ENCODE measurements at regions of chr6 and their contacts with region 1.

Region 1: GRCh38 chr6:28266962-28267694 is at the start of gene ZSCAN26:
- DNase-seq: peak; percentile 89
- H3K4me3 Mint-ChIP-seq: no peak within 1 kb of the TSS
- H3K27ac Mint-ChIP-seq: no peak within 1 kb of the TSS
- H3K4me1 Mint-ChIP-seq: no peaks in the 10 kb centered on the region
- H3K27me3 Mint-ChIP-seq: no peaks in the 10 kb centered on the region
- CTCF ChIP-seq: no peak
- total RNA-seq, gene ZSCAN26: 11.3 and 13.1 TPM in 2 replicates

Region 2: DNA sequence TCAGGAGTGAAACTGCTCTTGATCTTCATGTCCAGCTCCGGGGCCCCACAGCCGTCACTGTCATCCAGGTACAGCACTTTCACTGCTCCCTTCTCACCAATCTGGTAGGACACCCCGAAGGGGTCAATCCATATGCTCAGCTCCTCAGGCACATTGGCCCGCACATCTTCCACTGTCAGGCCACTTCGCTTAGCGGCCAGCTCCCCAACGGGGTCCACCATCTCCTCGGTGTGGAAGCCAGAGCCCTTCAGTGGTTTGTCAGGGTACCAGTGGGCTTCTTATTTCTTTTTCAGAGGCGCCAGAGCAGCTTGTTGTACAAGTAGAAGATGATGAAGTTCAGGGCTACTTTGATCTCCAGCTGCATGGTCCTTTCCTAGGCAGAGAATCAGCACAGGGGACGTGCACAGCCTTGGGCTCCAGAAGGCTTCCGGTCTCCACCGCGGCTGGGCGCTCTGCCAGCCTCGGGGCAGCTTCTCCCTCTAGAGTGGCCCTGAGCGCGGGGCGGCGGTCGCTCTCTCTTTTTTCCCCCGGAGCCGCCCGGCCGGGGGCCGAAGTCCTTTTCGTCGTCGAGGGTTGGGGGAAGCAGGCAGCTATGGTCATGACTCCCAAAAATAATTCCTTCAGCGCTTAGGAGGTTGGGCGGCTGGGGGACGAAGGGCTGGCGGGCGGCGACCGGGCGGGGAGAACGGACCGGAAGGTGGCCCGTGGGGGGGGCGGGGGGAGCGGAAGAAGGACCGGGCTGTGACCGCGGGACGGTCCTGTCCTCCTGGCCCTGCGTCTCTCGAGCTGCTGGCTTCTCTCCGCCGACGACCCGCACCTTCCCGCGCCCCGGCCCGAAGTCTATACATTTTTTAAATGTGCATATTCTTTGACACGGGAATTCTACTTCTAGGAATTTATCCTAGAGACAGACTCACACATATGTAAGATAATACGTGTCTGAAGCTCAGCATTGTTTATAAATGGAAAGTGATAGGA is 48.6 kb before region 1 on chr6:
- CTCF ChIA-PET with region 1: no interaction called
- POLR2A ChIA-PET with region 1: interaction called, 13 read pairs
- intact Hi-C with region 1: no loop called
- DNase-seq: peak; percentile 58
- H3K4me3 Mint-ChIP-seq: peak overlapping the region; percentile 78
- H3K27ac Mint-ChIP-seq: peak overlapping the region; percentile 76
- H3K4me1 Mint-ChIP-seq: peaks cover 6% of the 10 kb centered on the region
- H3K27me3 Mint-ChIP-seq: no peaks in the 10 kb centered on the region
- CTCF ChIP-seq: no peak

Region 3: GRCh38 chr6:28225056-28225834 is 41.9 kb before region 1 on chr6 and contains the start of gene ZSCAN9:
- CTCF ChIA-PET with region 1: interaction called, 5 read pairs
- POLR2A ChIA-PET with region 1: interaction called, 13 read pairs
- intact Hi-C with region 1: loop called (anchors 2 kb)
- DNase-seq: peak; percentile 93
- H3K4me3 Mint-ChIP-seq: peak within 1 kb of the TSS; percentile 94
- H3K27ac Mint-ChIP-seq: peak within 1 kb of the TSS; percentile 97
- H3K4me1 Mint-ChIP-seq: peaks cover 16% of the 10 kb centered on the region
- H3K27me3 Mint-ChIP-seq: no peaks in the 10 kb centered on the region
- CTCF ChIP-seq: no peak
- total RNA-seq, gene ZSCAN9: 13.7 and 15.6 TPM in 2 replicates

Region 4: DNA sequence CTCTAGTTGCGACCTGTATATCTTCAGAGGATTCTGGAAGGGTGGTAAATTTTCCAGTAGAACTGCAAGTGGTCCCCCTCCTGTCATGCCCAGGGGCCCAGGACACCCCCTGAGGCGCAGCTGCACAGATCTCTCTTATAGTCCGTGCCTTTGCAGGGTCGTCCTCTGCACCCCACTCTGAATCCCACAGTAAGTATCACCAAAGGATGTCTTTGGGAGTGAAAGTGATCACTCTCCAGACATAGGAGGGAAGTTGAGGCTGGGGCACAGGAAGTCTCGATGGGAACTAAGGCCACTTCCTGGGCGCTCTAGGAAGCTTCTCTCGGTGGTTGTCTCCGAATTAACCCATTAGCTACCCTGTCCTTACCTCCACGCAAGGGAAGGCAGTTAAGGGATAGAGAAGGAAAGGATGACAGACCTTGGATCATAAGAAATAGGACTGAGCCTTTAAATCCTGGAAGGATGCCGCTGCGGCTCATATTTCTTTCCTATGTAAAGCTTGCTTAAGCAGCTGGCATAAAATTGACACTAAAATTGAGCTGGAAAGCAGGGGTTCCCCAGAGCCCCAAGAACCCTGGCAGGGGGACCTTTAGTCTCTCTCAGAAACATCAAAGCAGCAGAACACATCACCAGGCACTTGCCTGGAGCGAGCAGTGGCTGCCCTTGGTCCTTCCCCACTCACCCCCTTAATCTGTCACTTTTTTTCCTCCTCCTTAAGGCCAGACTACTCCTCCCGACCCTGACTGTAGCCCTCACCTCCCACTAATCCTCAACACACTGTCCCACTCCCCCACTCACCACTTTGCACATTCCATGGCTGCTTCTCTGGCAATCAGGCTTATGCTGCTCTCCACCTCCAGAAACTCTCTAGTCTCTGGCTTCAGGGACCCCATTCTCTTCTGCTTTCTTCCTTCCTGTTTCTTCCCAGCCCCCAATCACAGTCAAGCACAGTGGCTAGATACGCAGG is 14.8 kb before region 1 on chr6 and contains the start of gene ZKSCAN4:
- CTCF ChIA-PET with region 1: interaction called, 3 read pairs
- POLR2A ChIA-PET with region 1: interaction called, 99 read pairs
- intact Hi-C with region 1: loop called (anchors 1 kb)
- DNase-seq: peak; percentile 91
- H3K4me3 Mint-ChIP-seq: peak within 1 kb of the TSS; percentile 93
- H3K27ac Mint-ChIP-seq: peak within 1 kb of the TSS; percentile 83
- H3K4me1 Mint-ChIP-seq: peaks cover 7% of the 10 kb centered on the region
- H3K27me3 Mint-ChIP-seq: no peaks in the 10 kb centered on the region
- CTCF ChIP-seq: no peak
- total RNA-seq, gene ZKSCAN4: 3.3 and 4.8 TPM in 2 replicates

Region 5: DNA sequence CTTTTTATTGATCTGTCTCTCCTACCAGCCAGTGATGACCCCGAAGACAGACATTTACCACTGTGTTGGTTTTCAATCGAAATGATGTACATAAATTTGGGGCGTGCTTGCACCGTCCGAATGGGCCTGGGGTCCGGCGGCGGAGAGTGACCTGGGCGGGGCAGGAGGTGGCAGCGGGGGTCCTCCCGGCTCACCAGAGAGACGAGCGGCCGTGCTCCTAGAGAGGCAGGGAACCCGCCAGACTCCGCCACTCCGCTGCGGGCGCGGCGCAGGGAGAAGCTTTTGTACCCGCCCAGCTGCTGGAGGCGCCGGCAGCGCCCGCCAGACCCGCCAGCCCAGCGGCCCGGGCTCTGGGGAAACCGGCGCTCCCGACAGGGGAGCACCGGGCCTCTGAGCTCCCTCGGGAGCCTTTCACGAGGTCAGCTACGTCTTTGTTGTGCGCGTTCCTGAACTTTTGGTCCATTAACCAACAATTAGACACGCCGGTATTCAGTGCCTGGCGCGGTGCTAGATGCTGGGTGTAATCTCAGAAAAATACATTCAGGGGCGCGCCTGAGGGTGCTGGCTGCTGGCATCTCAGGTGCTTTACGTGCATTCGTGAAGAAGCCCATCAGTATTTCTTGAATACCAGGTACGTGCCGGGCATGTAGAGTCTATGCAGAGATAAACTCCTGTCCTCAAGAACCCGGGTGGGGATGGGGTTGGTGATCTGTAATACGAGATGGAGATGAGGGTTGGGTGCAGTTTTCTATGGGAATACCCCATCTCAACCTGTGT is 14.3 kb after region 1 on chr6 and contains the start of gene PGBD1:
- CTCF ChIA-PET with region 1: interaction called, 5 read pairs
- POLR2A ChIA-PET with region 1: interaction called, 62 read pairs
- intact Hi-C with region 1: no loop called
- DNase-seq: peak; percentile 65
- H3K4me3 Mint-ChIP-seq: peak within 1 kb of the TSS; percentile 80
- H3K27ac Mint-ChIP-seq: no peak within 1 kb of the TSS
- H3K4me1 Mint-ChIP-seq: peaks cover 9% of the 10 kb centered on the region
- H3K27me3 Mint-ChIP-seq: no peaks in the 10 kb centered on the region
- CTCF ChIP-seq: no peak
- total RNA-seq, gene PGBD1: 2.5 and 2.9 TPM in 2 replicates

Region 6: GRCh38 chr6:28335564-28336283 is 68.6 kb after region 1 on chr6 and contains the start of gene ZSCAN31:
- CTCF ChIA-PET with region 1: no interaction called
- POLR2A ChIA-PET with region 1: interaction called, 52 read pairs
- intact Hi-C with region 1: loop called (anchors 1 kb)
- DNase-seq: peak; percentile 98
- H3K4me3 Mint-ChIP-seq: no peak within 1 kb of the TSS
- H3K27ac Mint-ChIP-seq: no peak within 1 kb of the TSS
- H3K4me1 Mint-ChIP-seq: no peaks in the 10 kb centered on the region
- H3K27me3 Mint-ChIP-seq: no peaks in the 10 kb centered on the region
- CTCF ChIP-seq: no peak
- total RNA-seq, gene ZSCAN31: 5.0 and 6.7 TPM in 2 replicates

Region 7: DNA sequence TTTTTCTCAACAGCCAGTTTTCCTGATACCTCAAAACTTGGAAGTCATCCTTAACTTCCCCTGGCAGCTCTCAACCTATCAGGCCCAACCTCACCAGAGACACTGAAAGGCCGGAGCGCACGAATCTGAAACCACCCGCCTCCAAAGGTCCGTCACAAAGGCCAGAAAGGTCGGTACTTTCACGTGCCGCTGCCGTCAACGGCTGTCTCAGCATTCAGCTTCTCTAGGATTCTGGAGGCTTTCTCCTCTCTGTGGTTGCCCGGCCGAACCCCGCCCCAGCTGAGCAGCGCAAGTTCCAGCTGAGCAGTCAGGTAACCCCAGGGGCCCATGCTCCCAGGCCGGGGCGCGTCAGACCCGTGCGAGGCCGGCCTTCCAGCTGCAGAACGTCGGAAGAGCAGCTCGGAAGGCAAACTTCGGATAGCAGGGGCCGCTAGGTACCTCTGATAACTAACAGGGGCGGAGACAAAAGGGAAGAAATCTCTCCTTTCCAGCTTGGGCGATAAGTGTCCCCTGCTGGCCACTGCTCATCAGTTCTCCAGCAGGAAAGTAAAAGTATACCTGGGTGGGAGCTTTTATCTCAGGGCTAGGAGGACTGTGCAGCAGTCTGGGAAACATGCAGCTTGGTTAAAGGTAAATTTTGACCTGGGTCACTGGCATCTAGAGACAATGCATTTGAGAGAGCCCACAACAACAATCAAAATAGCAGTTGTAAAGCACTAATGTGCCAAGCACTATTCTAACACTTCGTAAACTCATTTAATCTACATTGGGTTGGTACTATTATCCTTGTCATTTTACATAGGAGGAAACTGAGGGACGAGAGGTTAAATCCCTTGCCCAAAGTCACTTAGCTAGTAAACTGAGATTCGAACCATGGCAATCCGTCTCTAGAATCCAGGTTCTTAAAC is 116.4 kb after region 1 on chr6:
- CTCF ChIA-PET with region 1: interaction called, 3 read pairs
- POLR2A ChIA-PET with region 1: interaction called, 20 read pairs
- intact Hi-C with region 1: no loop called
- DNase-seq: peak; percentile 80
- H3K4me3 Mint-ChIP-seq: peak overlapping the region; percentile 82
- H3K27ac Mint-ChIP-seq: peak overlapping the region; percentile 96
- H3K4me1 Mint-ChIP-seq: peaks cover 14% of the 10 kb centered on the region
- H3K27me3 Mint-ChIP-seq: no peaks in the 10 kb centered on the region
- CTCF ChIP-seq: peak; percentile 48

Region 8: DNA sequence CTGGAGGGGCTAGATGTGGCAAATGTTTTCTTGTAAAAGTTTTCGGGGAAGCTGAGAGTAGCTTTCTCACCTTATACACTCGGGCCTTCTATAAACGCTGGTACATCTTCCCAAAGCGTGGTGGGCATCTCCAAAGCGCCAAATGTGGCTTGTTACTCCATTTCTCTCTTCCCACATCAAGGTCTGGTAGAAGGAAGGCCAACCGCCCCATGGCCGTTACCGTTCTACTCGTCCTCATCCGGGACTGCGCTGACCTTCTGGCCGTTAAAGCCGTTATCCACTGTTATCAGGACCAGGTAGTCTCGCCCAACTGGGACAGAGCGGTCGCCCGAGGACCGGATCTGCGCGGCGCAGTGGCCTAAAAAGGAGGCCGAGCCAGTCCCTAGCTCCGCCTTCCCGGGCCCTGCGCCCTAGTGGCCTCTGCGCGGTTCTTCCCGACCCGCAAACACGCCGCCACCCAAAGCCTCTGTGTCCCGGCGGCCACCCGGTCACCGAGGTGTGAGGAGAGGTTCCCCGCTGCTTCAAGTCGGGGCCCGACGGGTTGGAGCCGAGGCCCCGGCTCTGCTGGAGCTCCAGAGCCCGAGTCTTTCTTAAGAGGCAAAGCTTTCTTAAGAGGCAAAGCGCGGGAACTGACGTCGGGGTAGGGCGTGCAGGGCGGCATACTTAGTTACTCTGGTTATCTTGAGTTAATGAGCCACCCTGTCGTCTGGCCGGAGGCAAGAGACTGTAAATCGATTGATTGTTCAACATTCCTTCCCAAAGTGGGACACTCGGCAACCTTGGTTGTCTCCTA is 349.0 kb after region 1 on chr6:
- CTCF ChIA-PET with region 1: no interaction called
- POLR2A ChIA-PET with region 1: no interaction called
- intact Hi-C with region 1: no loop called
- DNase-seq: no peak
- H3K4me3 Mint-ChIP-seq: no peak overlapping the region
- H3K27ac Mint-ChIP-seq: no peak overlapping the region
- H3K4me1 Mint-ChIP-seq: no peaks in the 10 kb centered on the region
- H3K27me3 Mint-ChIP-seq: no peaks in the 10 kb centered on the region
- CTCF ChIP-seq: no peak

Measured in MCF 10A (cell line).